Mammary epithelial cell (primary cell): ENCODE measurements at regions of chr16 and their contacts with region 1.

Region 1: DNA sequence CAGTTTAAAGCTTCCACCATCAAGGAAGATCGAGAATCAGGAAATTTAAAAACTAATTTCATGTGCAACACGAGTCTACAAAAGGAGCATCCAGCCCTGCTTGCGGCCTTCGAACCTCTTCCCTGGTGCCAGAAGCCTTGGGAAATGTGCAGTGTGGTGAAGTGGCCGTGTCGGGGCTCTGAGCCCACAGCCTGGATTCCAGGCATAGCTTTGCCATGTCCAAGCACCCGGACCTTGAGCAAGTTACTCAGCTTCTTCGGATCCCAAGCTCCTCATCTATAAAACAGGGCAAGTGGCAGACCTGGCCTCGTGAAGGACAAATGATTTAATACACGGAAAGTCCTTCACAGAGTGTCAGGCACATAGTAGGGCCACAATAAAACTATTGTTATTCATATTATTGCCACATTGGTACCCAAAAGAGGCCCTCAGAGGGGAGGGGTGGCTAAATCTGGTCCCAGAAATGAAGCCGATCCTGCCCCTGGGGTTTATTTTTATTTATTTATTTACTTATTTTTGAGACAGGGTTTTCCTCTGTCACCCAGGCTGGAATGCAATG is 34.8 kb downstream of the COTL1 start:
- DNase-seq: no peak
- H3K4me3 ChIP-seq: no peak overlapping the region
- H3K27ac ChIP-seq: no peak overlapping the region
- H3K4me1 ChIP-seq: no peaks in the 10 kb centered on the region
- H3K27me3 ChIP-seq: no peaks in the 10 kb centered on the region
- CTCF ChIP-seq: no peak

Region 2: GRCh38 chr16:84548971-84549844 is 33.8 kb before region 1 on chr16:
- CTCF ChIA-PET with region 1: no interaction called
- dilution Hi-C with region 1: loop called (anchors 5 kb)
- in situ Hi-C with region 1: no loop called
- intact Hi-C with region 1: no loop called
- DNase-seq: no peak
- H3K4me3 ChIP-seq: no peak overlapping the region
- H3K27ac ChIP-seq: no peak overlapping the region
- H3K4me1 ChIP-seq: peaks cover 6% of the 10 kb centered on the region
- H3K27me3 ChIP-seq: no peaks in the 10 kb centered on the region
- CTCF ChIP-seq: no peak